RWPE1 (cell line): ENCODE measurements at regions of chr5 and their contacts with region 1.

Region 1: GRCh38 chr5:154771383-154771901 is 16.3 kb downstream of the LARP1 start:
- DNase-seq: no peak
- H3K27ac ChIP-seq: peak overlapping the region; percentile 34
- CTCF ChIP-seq: no peak

Region 2: GRCh38 chr5:154786414-154786813 is 15.0 kb after region 1 on chr5:
- CTCF ChIA-PET with region 1: interaction called, 10 read pairs
- POLR2A ChIA-PET with region 1: no interaction called
- DNase-seq: no peak
- H3K27ac ChIP-seq: no peak overlapping the region
- CTCF ChIP-seq: no peak